ENCODE measurements at regions of chr2 and their contacts with region 1.

Region 1: DNA sequence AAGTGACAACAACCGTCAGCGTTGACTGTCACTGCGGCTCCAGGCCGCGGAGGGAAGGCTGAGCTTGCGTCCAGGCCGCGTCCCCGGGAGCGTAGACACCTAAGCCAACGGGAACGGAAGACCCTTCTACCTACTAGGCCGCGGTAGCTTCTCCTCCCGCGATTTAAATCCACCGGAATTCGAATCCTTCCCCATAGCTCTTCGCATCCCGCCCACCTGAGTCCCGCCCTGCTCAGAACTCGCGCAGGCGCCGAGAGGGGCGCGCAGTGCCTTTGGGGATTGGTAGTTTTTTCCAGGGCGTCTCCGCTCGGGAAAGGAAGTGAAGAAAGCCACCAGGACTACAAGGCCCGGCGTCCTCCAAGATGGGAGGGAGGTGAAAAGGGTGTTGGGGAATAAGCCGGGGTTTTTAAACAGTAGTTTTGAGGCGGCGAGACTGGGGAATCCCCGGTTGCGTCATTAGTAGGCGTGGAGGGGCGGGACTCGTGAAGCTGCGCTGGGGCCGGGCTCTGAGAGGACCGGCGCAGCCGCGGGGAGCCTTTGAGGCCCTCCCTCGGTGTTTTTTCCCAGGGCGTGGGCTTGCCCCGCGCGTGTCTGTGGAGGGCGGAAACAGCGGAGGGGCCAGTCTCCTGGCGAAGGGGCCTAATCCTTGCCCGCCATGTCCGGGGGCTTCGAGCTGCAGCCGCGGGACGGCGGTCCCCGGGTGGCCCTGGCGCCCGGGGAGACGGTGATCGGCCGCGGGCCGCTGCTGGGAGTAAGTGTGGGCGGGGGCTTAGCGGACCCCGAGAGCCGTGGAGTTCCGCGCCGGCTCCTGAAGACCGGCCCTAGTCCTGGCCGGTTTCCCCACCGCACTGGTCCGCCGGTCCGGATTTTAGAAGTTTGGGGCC is at the starts of genes APLF and FBXO48:
- DNase-seq: peak; percentile 98
- H3K4me3 Mint-ChIP-seq: peak within 1 kb of the TSS; percentile 95
- H3K27ac Mint-ChIP-seq: peak within 1 kb of the TSS; percentile 94
- H3K4me1 Mint-ChIP-seq: peaks cover 50% of the 10 kb centered on the region
- H3K27me3 Mint-ChIP-seq: no peaks in the 10 kb centered on the region
- total RNA-seq, gene APLF: 3.8 TPM in 2 replicates
- total RNA-seq, gene FBXO48: 1.3 TPM in 2 replicates

Region 2: DNA sequence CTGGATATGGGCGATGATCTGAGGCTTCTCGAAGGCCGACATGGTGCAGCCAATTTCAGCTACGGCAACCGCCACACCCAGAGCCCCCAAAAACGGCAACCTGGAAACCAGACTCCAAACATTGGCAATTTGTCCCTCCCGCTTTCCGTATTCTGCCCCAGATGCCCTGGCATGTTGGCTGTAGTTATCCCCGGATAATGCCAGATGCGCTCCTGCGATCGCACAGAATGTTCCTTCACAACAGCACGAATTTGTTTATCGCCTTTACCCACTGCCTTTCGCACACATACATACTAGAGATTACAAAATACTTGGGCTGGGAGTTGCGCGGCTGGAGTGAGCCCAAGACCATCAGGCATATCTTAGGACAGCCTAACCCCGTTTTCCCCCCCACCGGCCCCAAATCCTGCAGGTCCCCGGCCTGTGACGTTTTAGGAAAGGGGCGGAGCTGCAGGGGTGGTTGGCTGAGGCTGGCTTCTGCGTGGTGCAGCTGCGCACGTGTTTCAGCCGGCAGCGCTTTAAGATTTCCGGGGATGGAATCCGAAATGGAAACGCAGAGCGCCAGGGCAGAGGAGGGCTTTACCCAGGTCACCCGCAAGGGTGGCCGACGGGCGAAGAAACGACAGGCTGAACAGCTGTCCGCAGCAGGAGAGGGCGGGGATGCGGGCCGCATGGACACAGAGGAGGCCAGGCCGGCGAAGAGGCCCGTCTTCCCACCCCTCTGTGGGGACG is 309.8 kb before region 1 on chr2 and contains the start of gene PNO1:
- intact Hi-C with region 1: loop called (anchors 2 kb)
- DNase-seq: peak; percentile 95
- H3K4me3 Mint-ChIP-seq: peak within 1 kb of the TSS; percentile 95
- H3K27ac Mint-ChIP-seq: peak within 1 kb of the TSS; percentile 99
- H3K4me1 Mint-ChIP-seq: peaks cover 40% of the 10 kb centered on the region
- H3K27me3 Mint-ChIP-seq: no peaks in the 10 kb centered on the region
- total RNA-seq, gene PNO1: 24.5 and 24.7 TPM in 2 replicates

Region 3: DNA sequence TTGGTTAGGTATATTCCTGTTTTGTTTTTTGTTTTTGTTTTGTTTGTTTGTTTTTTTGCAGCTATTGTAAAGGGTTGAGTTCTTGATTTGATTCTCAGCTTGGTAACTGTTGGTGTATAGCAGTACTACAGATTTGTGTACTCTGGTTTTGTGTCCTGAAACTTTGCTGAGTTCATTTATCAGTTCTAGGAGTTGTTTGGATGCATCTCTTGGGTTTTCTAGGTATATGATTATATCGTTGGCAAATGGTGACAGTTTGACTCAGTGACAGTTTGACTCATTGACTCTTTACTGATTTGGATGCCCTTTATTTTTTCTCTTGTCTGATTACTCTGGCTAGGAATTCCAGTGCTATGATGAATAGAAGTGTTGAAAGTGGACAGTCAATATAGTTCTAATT is 53.7 kb after region 1 on chr2:
- intact Hi-C with region 1: loop called (anchors 2 kb)
- DNase-seq: no peak
- H3K4me3 Mint-ChIP-seq: no peak overlapping the region
- H3K27ac Mint-ChIP-seq: peak overlapping the region; percentile 27
- H3K4me1 Mint-ChIP-seq: peaks cover 22% of the 10 kb centered on the region
- H3K27me3 Mint-ChIP-seq: no peaks in the 10 kb centered on the region

Region 4: DNA sequence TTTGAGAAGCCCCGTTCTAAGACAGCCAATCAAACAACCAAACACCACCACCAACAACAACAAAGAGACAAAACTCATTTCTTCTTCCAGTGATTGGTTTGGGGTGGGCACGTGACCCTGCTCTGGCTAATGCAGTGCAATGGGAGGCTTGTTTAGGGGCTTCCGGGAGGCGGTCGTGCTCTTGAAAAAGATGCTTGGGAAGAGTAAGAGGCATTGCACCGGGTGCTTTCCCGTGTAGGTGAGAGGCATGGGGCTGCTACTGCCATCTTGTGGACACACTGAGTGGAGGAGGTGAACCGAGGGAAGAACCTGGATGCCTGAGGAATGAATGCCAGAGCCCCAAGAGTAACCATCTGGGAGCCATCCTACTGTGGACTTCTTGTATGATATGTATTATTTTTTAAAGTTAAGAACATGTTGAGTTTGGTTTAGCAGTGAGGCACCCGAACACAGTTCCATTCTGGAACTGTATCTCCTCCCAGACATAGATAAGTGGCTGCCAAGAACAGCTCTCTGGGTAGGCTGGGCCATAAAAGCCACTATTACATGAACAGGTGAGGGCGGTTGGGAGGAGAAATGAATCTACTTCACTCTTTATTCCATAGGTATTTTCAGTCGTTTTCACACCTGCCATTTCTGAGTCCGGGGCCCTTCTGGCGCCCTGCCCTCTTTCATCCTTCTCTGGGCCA is 248.2 kb after region 1 on chr2:
- intact Hi-C with region 1: loop called (anchors 1 kb)
- DNase-seq: no peak
- H3K4me3 Mint-ChIP-seq: no peak overlapping the region
- H3K27ac Mint-ChIP-seq: peak overlapping the region; percentile 60
- H3K4me1 Mint-ChIP-seq: peaks cover 73% of the 10 kb centered on the region
- H3K27me3 Mint-ChIP-seq: no peaks in the 10 kb centered on the region

Region 5: DNA sequence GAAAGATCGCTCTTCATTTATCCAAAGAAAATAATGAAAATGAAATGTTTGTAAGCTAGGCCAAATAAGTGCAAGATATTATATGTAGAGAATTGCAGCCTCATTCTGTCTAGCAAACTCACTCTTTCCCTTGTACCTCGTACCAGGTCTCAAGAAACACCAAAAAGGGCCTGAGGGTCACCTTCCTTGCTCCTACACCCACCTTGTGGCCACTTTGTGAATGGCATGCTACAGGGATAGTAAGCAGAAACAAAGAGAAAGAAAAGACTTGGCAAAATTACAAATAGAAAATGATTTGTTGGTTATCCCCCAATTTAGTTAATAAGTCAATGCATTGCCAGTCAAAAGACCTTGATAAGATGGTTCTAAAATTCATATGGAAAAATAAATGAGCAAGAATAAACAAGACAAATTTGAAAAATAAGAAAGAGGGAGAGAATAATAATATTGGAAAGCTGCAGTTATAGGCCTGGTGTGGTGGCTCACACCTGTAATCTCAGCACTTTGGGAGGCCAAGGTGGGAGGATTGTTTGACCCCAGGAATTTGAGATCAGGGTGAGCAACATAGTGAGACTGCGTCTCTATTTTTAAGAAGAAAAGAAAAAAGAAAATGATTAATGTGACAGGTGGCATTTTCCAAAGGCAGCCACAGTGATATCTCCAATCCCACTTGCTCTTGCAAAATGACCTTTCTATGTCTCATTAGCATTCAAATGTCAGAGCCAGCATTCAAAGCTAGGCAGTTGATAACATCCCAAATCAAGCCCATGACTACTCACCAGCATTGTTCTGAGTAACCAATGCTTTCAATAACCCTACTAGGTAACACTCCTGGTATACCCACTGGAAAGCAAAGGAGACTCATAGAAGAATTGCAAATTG is 442.7 kb after region 1 on chr2:
- intact Hi-C with region 1: loop called (anchors 2 kb)
- DNase-seq: peak; percentile 62
- H3K4me3 Mint-ChIP-seq: no peak overlapping the region
- H3K27ac Mint-ChIP-seq: peak overlapping the region; percentile 70
- H3K4me1 Mint-ChIP-seq: peaks cover 33% of the 10 kb centered on the region
- H3K27me3 Mint-ChIP-seq: no peaks in the 10 kb centered on the region

Region 6: DNA sequence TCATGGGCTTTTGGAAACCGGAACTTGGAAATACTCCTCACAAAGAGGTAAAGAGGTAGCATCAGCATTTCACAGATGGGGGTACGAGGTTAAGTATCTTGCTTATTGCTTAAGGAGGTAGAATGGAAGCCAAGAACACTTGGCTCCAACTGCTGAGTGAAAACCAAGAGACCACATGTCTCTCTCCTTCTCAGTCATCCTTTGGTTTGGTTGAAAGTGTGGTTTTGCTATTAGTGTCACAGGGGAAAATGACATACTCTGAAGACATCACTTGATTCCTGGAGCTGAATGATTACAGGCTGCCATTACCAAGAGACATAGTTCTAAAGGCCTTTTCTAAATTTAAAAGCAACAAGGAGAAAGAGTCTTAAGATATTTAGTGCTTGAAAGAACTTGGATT is 587.1 kb after region 1 on chr2:
- intact Hi-C with region 1: loop called (anchors 10 kb)
- DNase-seq: no peak
- H3K4me3 Mint-ChIP-seq: no peak overlapping the region
- H3K27ac Mint-ChIP-seq: peak overlapping the region; percentile 62
- H3K4me1 Mint-ChIP-seq: peaks cover 24% of the 10 kb centered on the region
- H3K27me3 Mint-ChIP-seq: peaks cover 47% of the 10 kb centered on the region